Left lung (tissue), 14 donors: ENCODE measurements at regions of chr1 and their contacts with region 1.

Region 1: GRCh38 chr1:167715157-167715999 is 6.4 kb upstream of the MPZL1 start:
- DNase-seq: peak in 3 of 4 donors; percentile 82 to 91 (median 86)
- ATAC-seq: peak; percentile 65
- H3K4me3 ChIP-seq: peak overlapping the region; percentile 65 to 67
- H3K27ac ChIP-seq: peak overlapping the region; percentile 87 to 89
- H3K4me1 ChIP-seq: peaks cover 0 to 34% of the 10 kb centered on the region in 2 donors
- H3K27me3 ChIP-seq: no peaks in the 10 kb centered on the region
- CTCF ChIP-seq: peak; percentile 52 to 72

Region 2: GRCh38 chr1:167797015-167797414 is 81.6 kb after region 1 on chr1:
- intact Hi-C with region 1: loop called in 1 of 2 experiments (anchors 5 kb)
- DNase-seq: peak in 3 of 4 donors; percentile 73 to 88 (median 79)
- ATAC-seq: peak; percentile 98
- H3K4me3 ChIP-seq: no peak overlapping the region
- H3K27ac ChIP-seq: peak overlapping the region; percentile 68 to 75
- H3K4me1 ChIP-seq: peaks cover 13 to 17% of the 10 kb centered on the region in 2 donors
- H3K27me3 ChIP-seq: no peaks in the 10 kb centered on the region
- CTCF ChIP-seq: no peak